Pancreas (tissue), 10 donors: ENCODE measurements at regions of chr14 and their contacts with region 1.

Region 1: DNA sequence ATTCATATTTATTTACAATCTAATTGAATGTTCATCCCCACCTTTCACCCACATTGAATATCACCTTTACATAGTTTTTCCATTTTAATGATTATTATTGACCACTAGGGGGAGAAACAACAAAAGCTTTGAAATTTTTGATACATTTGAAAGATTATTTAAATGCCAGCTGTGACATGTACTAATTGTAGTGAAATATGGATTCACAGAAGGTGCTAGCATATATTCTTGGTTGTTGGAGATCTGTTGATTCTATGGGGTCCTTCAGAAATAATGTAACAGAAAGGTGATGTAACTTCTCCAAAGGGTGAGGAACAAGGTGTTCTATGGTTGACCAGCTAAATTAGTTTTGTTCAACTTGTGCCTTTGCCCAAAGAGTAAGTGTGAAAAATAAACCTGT is 22.4 kb upstream of the GPR33 start:
- DNase-seq: no peak
- ATAC-seq: peak in 2 of 4 donors; percentile 30 to 48
- H3K4me3 ChIP-seq: no peak overlapping the region
- H3K27ac ChIP-seq: no peak overlapping the region
- H3K4me1 ChIP-seq: no peaks in the 10 kb centered on the region
- H3K27me3 ChIP-seq: no peaks in the 10 kb centered on the region
- CTCF ChIP-seq: peak; percentile 27 to 64 (median 50)

Region 2: GRCh38 chr14:31142455-31143087 is 367.7 kb before region 1 on chr14:
- intact Hi-C with region 1: no loop called
- DNase-seq: no peak
- ATAC-seq: no peak
- H3K4me3 ChIP-seq: no peak overlapping the region
- H3K27ac ChIP-seq: no peak overlapping the region
- H3K4me1 ChIP-seq: no peaks in the 10 kb centered on the region
- H3K27me3 ChIP-seq: no peaks in the 10 kb centered on the region
- CTCF ChIP-seq: no peak

Region 3: DNA sequence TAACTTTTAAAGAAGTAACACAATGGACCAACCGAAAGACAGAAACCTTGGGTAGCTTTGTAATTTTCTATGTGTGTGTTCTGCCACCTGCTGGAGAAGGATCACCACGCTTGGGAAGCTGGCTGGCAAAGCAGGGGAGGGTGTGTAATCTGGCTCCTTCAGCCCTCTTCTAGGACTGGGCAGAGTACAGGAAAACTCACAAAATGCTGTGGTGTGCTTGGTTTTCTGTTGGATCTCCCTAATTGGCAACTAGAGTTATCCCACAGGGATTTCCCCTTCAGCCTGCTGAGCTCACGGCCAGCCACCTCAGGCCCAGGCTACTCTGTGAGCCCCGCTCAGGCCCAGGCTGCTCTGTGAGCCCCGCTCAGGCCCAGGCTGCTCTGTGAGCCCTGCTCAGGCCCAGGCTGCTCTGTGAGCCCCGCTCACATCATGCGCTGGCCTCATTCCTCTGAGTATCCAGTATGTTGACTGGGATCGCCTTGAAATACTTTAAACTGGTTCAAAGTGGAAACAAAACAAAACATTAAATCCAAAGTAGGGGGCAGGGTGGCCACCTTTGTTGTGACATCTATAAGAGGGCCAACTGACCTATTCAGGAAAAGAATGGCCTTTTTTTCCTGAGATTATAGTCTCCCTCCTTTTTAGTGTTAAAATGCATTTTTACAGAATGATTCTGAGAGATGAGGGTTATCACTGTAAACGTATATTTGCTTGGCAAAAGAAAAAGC is 744.9 kb after region 1 on chr14:
- intact Hi-C with region 1: loop called in 1 of 3 experiments (anchors 5 kb)
- DNase-seq: peak; percentile 33 to 72 (median 50)
- ATAC-seq: peak; percentile 80 to 91 (median 89)
- H3K4me3 ChIP-seq: no peak overlapping the region
- H3K27ac ChIP-seq: no peak overlapping the region
- H3K4me1 ChIP-seq: no peaks in the 10 kb centered on the region
- H3K27me3 ChIP-seq: no peaks in the 10 kb centered on the region
- CTCF ChIP-seq: peak; percentile 42 to 70 (median 59)